ENCODE measurements at regions of chr7 and their contacts with region 1.

Region 1: GRCh38 chr7:31373337-31374289 is 33.1 kb upstream of the NEUROD6 start:
- DNase-seq: peak; percentile 76 to 78
- ATAC-seq: peak; percentile 98 to 99
- H3K4me3 ChIP-seq: no peak overlapping the region
- H3K27ac ChIP-seq: peak overlapping the region in 1 of 2 experiments; percentile 19; a peak in 3 of 6 replicates
- H3K4me1 ChIP-seq: no peaks in the 10 kb centered on the region
- CTCF ChIP-seq: peak; percentile 91
- EP300 ChIP-seq: no peak
- POLR2A ChIP-seq: no peak
- RAD21 ChIP-seq: peak; percentile 94 to 95

Region 2: DNA sequence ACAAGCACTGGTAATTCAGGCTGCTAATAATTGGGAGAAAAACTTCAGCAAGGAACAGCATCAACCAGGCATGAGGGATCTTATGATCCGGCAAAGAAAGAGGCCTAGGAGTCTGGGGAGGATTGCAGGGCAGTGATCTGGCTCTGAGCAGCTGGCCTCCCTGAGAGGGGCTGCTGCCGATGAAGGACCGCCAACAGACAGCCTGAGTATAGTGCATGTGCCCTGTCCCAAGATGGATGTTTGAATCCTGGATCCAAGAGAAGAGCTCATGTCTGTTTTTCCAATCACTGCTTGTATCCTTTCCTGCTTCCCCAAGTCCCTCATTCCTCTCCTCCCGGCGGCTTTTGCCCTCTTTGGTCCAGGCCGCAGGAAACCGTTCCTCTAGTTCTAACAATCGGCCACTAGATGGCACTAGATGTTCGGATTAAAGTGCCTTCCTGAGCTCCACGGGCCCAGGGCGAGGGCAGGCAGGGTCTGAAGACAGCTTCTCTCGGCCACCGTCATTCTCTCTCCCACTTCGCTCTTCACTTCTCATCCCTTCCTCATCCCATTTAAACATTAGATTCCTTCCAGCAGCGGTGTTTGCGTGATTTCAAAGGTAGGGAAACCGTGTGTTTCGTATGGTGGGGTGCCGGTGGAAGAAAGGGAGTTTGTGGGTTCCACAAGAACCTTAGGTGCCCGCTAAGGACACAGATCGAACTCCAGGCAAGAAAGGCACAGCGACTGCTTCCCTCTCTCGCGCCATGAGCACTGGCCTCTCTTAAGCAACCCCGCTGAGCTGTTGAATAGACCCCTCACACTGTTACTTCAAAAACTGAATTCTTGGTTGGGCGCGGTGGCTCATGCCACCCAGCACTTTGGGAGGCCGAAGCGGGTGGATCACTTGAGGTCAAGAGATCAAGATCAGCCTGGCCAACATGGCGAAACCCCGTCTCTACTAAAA is 239.1 kb before region 1 on chr7:
- CTCF ChIA-PET with region 1: interaction called, 25 read pairs
- POLR2A ChIA-PET with region 1: no interaction called
- DNase-seq: peak; percentile 67 to 76
- ATAC-seq: peak; percentile 98 to 100
- H3K4me3 ChIP-seq: no peak overlapping the region
- H3K27ac ChIP-seq: no peak overlapping the region
- H3K4me1 ChIP-seq: no peaks in the 10 kb centered on the region
- CTCF ChIP-seq: peak; percentile 79
- EP300 ChIP-seq: no peak
- POLR2A ChIP-seq: no peak
- RAD21 ChIP-seq: peak; percentile 78 to 82

Region 3: GRCh38 chr7:31398815-31399214 is 25.2 kb after region 1 on chr7:
- CTCF ChIA-PET with region 1: interaction called, 12 read pairs
- POLR2A ChIA-PET with region 1: no interaction called
- DNase-seq: peak in 1 of 2 experiments; percentile 16
- ATAC-seq: peak in 1 of 2 experiments; percentile 35; a peak in 1 of 6 replicates
- H3K4me3 ChIP-seq: no peak overlapping the region
- H3K27ac ChIP-seq: no peak overlapping the region
- H3K4me1 ChIP-seq: no peaks in the 10 kb centered on the region
- CTCF ChIP-seq: no peak
- EP300 ChIP-seq: no peak
- POLR2A ChIP-seq: no peak
- RAD21 ChIP-seq: no peak

Region 4: GRCh38 chr7:31432836-31433340 is 59.3 kb after region 1 on chr7:
- CTCF ChIA-PET with region 1: interaction called, 16 read pairs
- POLR2A ChIA-PET with region 1: no interaction called
- DNase-seq: peak in 1 of 2 experiments; percentile 20
- ATAC-seq: peak in 1 of 2 experiments; percentile 44; a peak in 1 of 6 replicates
- H3K4me3 ChIP-seq: no peak overlapping the region
- H3K27ac ChIP-seq: 0 out of 6 replicates have a peak overlapping the region, but pooled peaks of 1 of the 2 experiments have one; percentile 3
- H3K4me1 ChIP-seq: 0 out of 3 replicates have a peak, but pooled peaks cover 6% of the 10 kb centered on the region
- CTCF ChIP-seq: no peak
- EP300 ChIP-seq: no peak
- POLR2A ChIP-seq: no peak
- RAD21 ChIP-seq: no peak

Region 5: DNA sequence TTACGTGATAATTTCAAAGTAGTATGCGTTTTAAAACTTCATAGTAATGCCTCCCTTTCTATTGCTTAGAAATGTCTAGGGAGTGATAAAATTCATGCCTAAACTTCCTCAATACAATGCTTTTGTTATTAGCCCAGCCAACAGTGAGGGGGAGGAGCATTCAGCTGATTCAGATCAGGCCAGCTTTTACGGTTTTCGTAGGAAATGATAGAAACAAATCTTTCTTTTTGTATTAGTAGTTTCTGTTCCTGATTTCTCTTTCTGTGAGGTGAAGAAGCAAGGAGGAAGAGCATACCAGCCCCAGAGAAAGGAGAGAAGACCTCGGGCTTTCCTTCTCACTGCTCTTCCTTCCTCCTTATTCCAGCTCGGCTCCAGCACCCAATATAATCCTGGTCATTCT is 105.1 kb after region 1 on chr7:
- CTCF ChIA-PET with region 1: interaction called, 30 read pairs
- POLR2A ChIA-PET with region 1: no interaction called
- DNase-seq: no peak
- ATAC-seq: no peak
- H3K4me3 ChIP-seq: no peak overlapping the region
- H3K27ac ChIP-seq: no peak overlapping the region
- H3K4me1 ChIP-seq: no peaks in the 10 kb centered on the region
- CTCF ChIP-seq: no peak
- EP300 ChIP-seq: no peak
- POLR2A ChIP-seq: no peak
- RAD21 ChIP-seq: no peak

Region 6: DNA sequence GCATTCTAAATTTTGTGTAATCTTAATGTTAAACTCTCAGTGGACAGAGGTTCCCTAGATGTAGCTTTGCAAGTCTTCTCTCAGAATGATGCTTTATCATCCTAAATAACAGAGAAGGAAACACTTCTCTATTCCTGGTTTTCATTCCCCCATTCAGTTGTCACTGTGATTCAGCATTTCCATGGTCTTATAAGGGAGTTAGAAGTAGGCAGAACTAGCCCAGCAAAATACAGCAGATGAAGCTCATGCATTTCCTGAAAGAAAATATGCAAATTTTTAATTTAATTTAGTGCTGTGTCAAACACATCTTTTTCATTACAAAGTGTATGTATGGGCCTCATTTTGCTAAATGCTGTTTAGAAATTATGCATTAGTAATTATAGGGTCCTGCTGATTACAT is 210.3 kb after region 1 on chr7:
- CTCF ChIA-PET with region 1: no interaction called
- POLR2A ChIA-PET with region 1: no interaction called
- DNase-seq: peak in 1 of 2 experiments; percentile 9
- ATAC-seq: no peak
- H3K4me3 ChIP-seq: no peak overlapping the region
- H3K27ac ChIP-seq: no peak overlapping the region
- H3K4me1 ChIP-seq: no peaks in the 10 kb centered on the region
- CTCF ChIP-seq: no peak
- EP300 ChIP-seq: no peak
- POLR2A ChIP-seq: no peak
- RAD21 ChIP-seq: no peak

Region 7: GRCh38 chr7:31642681-31643116 is 269.1 kb after region 1 on chr7:
- CTCF ChIA-PET with region 1: interaction called, 10 read pairs
- POLR2A ChIA-PET with region 1: no interaction called
- DNase-seq: no peak
- ATAC-seq: no peak
- H3K4me3 ChIP-seq: no peak overlapping the region
- H3K27ac ChIP-seq: no peak overlapping the region
- H3K4me1 ChIP-seq: no peaks in the 10 kb centered on the region
- CTCF ChIP-seq: no peak
- EP300 ChIP-seq: no peak
- POLR2A ChIP-seq: no peak
- RAD21 ChIP-seq: no peak

Measured in A549 (cell line).